HEK293 (cell line): ENCODE measurements at regions of chr19 and their contacts with region 1.

Region 1: DNA sequence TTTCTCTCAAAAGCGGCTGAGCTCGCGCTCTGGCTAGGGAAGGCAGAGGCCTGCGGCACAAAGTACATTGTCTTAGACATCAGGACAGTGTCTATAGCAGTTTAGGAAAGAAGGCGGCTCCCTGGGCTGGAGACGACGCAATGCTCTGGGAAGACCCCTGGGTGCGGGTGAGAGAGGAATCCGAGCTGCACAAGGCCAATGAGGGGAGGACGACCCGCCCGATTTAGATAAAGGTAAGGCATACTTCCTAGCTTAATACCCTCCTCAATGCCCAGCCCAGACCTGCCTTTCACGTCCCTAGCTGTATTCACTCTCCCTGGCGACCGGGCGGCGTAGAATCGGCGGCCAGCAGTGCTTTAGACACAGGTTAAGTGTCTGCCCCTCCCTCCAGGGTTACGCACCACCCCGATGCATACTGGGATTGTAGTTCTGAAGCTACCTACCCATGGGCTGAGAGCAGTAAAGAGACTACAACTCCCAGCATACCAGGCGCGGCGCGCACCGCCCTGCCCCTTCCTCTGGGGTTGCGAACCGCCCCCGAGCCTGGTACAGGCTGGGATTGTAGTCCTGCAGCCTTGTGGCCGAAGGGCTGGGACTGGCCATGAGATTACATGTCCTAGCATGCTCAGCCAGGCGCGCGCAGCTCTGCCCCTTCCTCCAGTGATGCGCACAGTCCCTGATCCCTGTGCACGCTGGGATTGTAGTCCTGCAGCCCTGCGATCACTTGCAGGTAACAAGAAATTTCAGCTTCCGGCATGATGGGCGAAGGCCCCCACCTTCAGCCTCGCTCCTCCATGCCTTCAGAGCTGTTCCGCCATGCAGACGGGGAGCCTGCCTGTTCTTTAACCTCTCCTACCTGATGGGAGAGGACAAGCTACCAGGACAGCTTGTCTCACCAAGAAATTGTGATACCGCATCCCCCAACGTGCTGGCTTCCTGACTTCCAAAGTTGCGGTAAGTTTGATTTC is 43.4 kb upstream of the ZNF14 start:
- H3K4me3 ChIP-seq: peak overlapping the region; percentile 50
- H3K27ac ChIP-seq: peak overlapping the region; percentile 46; the same call in 1 of the 2 replicates
- H3K4me1 ChIP-seq: no peaks in the 10 kb centered on the region
- CTCF ChIP-seq: 0 out of 2 replicates have a peak, but pooled peaks have one; percentile 7

Region 2: DNA sequence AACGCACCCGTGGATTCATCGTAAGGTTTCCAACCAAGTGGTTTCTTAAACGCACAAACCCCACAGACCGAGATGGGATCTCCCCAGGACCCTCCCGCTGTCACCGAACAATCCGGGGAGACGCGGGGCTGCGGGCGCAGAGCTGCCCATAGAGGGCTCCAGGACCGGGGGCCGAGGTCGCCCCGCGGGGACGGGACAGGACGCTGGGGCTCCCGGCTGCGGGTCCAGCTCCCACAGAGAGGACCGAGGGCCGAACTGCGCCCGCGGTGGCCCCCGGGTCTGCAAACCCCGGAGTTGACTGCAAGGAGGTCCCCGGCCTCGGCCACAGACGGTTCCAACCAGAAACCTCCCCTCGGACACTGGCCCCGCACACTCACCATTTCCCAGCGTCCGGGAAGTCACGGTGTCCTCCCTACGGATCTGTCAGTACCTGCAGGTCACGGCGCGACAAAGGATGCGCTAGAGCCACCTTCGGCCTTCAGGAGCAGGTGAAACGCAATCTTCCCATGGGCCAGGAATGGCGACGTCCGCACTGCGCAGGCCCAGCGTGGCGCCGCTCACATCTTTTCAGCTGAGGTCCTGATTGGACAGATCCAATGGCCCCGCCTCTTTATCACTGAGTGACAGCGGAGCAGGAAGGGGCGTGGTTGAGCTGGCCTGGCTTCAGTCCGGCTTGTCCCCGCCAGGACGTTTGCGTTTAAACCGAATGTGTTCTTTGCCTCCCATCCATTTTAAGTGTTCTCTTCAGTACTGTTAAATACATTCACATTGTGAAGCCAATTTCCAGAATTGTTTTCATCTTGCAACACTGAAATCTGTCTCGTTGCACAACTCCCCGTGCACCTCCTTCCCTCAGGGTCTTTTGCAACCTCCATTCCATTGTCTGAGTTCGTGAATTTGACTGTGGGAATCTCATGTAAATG is 43.5 kb before region 1 on chr19 and contains the start of gene ZNF14:
- CTCF ChIA-PET with region 1: no interaction called
- POLR2A ChIA-PET with region 1: interaction called, 29 read pairs
- H3K4me3 ChIP-seq: peak within 1 kb of the TSS; percentile 96
- H3K27ac ChIP-seq: peak within 1 kb of the TSS; percentile 27; the same call in 1 of the 2 replicates
- H3K4me1 ChIP-seq: no peaks in the 10 kb centered on the region
- CTCF ChIP-seq: no peak; the same call in 1 of the 2 replicates

Region 3: DNA sequence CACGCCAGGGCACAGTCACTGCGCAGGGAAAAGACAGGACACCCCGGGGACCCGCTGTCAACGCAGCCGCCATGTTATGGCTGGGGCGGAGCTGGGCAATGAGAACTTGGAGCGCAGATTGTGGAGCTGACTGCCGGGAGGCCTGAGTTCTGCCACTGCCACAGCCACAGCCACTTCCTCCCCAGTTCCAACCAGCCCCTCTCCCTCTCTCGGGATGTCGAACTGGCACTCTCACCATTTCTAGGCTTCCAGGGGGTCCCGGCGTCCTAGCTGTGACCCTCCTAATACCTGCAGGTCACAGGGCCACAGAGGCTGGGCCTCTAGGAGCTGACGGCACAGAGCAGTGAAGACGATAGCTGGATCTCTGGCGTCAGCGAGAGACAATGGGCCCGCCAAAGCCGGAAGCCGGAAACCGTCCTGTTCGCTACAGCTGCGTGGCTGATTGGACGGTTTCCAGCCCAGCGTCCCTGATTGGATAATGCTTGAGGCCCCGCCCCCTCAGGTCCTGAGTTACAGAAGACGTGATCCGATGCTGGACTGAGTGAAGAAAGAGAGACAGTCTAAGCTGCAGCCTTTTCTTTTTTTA is 45.1 kb after region 1 on chr19 and contains the start of gene ZNF506:
- CTCF ChIA-PET with region 1: no interaction called
- POLR2A ChIA-PET with region 1: interaction called, 42 read pairs
- H3K4me3 ChIP-seq: peak within 1 kb of the TSS; percentile 60
- H3K27ac ChIP-seq: peak within 1 kb of the TSS; percentile 74
- H3K4me1 ChIP-seq: no peaks in the 10 kb centered on the region
- CTCF ChIP-seq: no peak

Region 4: DNA sequence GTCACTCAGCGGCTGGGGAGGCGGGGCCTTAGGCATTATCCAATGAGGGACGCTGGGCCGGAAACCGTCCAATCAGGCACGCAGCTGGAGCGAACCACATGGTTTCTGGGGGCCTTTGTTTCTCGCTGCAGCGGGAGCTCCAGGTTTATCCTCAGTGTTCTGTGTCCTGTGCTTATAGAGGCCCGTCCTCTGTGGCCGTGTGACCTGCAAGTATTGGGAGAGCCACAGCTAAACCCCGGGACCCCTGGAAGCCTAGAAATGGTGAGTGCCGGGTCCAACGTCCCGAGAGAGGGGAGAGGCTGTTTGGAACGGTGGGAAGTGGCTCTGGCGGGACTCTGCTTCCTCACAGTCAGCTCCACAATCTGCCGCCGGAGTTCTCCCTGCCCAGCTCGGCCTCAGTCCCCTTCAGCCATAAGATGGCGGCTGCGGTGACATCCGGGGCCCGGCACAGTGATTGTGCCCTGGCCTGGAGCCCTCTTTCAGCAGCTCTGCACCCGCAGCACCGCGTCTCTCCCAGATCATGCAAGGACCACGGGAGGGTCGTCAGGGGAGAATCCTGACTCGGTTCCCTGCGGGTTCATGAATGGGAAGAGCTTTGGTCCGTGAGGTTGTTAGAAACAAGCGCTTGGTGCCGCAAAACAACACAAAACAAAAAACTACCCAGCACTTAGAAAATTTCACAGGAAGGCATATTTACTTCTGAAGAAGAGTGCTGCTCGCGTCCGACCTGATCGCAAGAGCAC is 89.6 kb after region 1 on chr19 and contains the start of gene ZNF253:
- CTCF ChIA-PET with region 1: no interaction called
- POLR2A ChIA-PET with region 1: interaction called, 32 read pairs
- H3K4me3 ChIP-seq: peak within 1 kb of the TSS; percentile 52
- H3K27ac ChIP-seq: peak within 1 kb of the TSS; percentile 14; the same call in 1 of the 2 replicates
- H3K4me1 ChIP-seq: no peaks in the 10 kb centered on the region
- CTCF ChIP-seq: no peak

Region 5: GRCh38 chr19:19900729-19901444 is 124.6 kb after region 1 on chr19 and contains the start of gene ZNF93:
- CTCF ChIA-PET with region 1: no interaction called
- POLR2A ChIA-PET with region 1: interaction called, 21 read pairs
- H3K4me3 ChIP-seq: peak within 1 kb of the TSS; percentile 67
- H3K27ac ChIP-seq: no peak within 1 kb of the TSS
- H3K4me1 ChIP-seq: no peaks in the 10 kb centered on the region
- CTCF ChIP-seq: no peak

Region 6: GRCh38 chr19:20051841-20052768 is 275.8 kb after region 1 on chr19:
- CTCF ChIA-PET with region 1: no interaction called
- POLR2A ChIA-PET with region 1: interaction called, 10 read pairs
- H3K4me3 ChIP-seq: peak overlapping the region; percentile 67
- H3K27ac ChIP-seq: no peak overlapping the region
- H3K4me1 ChIP-seq: no peaks in the 10 kb centered on the region
- CTCF ChIP-seq: no peak